Tibial artery (tissue), 4 donors: ENCODE measurements at regions of chr2 and their contacts with region 1.

Region 1: DNA sequence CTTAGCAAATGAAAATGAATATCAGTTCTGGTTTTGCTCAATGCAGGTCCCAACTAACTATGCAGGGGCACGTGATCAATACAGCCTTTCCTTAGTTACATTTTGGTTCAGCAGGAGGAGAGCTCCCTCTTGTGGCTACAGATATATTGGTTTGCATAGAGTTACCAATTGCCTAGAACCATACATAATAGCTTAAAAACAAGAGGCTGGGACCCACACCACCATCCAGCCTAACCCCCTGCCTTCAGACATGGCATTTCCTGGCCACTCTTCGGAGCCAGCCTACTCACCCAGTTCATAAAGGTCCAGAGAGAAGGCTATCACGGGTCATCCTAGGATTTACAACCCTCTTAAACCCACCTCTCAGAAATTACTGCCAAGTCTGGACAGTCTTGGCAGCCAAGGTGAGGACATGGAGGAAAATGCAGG is 10.5 kb downstream of the CCDC93 start:
- DNase-seq: peak in 1 of 2 donors; percentile 46
- H3K4me3 ChIP-seq: no peak overlapping the region
- H3K27ac ChIP-seq: no peak overlapping the region
- H3K4me1 ChIP-seq: peaks cover 0 to 4% (median 0%) of the 10 kb centered on the region in 4 donors
- H3K27me3 ChIP-seq: no peaks in the 10 kb centered on the region
- CTCF ChIP-seq: peak; percentile 74 to 83

Region 2: DNA sequence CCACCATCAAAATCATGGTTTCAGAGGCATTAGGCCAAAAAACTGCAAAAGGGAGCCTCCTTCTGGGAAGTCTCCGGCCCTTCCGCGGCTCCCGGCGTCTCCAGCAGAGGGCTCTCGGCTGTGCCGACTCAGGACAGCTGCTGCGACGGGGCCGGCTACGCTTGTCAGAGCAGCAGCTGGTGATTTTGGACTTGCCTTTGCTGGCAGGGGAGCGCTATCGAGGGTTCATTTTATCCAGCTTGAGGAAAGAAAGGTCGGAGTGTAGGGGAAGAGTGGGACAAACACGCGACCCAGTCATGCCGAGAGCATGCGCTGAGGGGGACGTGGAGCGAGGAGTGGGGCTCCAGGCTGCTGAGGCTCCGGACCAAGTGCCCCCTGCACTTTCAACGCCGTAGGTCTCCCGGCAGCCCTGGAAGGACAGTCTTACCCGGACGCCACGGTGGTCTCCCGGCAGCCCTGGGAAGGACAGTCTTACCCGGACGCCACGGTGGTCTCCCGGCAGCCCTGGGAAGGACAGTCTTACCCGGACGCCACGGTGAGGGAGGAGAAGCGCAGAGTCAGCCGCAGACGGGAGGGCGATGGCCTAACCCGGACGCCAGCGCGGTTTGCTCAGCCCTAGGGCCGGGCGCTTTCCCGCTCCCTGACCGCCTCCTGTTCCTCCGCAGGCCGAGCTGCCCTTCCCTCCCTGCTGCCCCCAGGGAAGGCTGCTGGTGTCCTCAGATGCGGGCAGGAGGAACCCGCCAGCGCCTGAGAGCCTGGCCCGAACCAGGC is 167.2 kb before region 1 on chr2:
- intact Hi-C with region 1: loop called (anchors 5 kb)
- DNase-seq: peak; percentile 79 to 87
- H3K4me3 ChIP-seq: peak overlapping the region; percentile 54 to 62
- H3K27ac ChIP-seq: peak overlapping the region; percentile 34 to 65
- H3K4me1 ChIP-seq: peaks cover 0 to 16% (median 8%) of the 10 kb centered on the region in 4 donors
- H3K27me3 ChIP-seq: no peaks in the 10 kb centered on the region
- CTCF ChIP-seq: peak; percentile 65 to 79

Region 3: GRCh38 chr2:117985092-117985491 is 18.3 kb before region 1 on chr2:
- intact Hi-C with region 1: no loop called
- DNase-seq: no peak
- H3K4me3 ChIP-seq: no peak overlapping the region
- H3K27ac ChIP-seq: no peak overlapping the region
- H3K4me1 ChIP-seq: peaks cover 0 to 4% (median 2%) of the 10 kb centered on the region in 4 donors
- H3K27me3 ChIP-seq: no peaks in the 10 kb centered on the region
- CTCF ChIP-seq: no peak

Region 4: DNA sequence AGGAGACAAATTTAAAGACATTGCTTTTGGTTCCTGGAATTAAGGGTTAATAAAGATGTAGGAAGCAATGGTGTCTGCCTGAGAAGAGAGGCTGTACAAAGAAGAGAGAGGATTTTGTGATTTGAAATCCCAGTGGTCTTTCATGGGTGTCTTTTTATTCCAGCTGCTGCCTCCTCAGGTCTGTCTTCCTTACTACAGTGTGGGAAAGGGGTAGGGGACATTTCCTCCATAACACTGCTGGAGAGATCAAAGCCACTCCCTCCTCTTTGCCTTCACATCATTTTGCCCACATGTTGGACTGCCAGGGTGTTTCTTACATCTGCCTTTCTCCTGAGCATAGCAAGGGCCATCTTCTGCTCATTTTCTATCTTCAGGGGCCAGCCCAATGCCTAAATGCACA is 495.5 kb after region 1 on chr2:
- intact Hi-C with region 1: no loop called
- DNase-seq: no peak
- H3K4me3 ChIP-seq: no peak overlapping the region
- H3K27ac ChIP-seq: no peak overlapping the region
- H3K4me1 ChIP-seq: no peaks in the 10 kb centered on the region
- H3K27me3 ChIP-seq: peaks cover 0 to 5% of the 10 kb centered on the region in 2 donors
- CTCF ChIP-seq: no peak